ENCODE measurements at regions of chr11 and their contacts with region 1.

Region 1: DNA sequence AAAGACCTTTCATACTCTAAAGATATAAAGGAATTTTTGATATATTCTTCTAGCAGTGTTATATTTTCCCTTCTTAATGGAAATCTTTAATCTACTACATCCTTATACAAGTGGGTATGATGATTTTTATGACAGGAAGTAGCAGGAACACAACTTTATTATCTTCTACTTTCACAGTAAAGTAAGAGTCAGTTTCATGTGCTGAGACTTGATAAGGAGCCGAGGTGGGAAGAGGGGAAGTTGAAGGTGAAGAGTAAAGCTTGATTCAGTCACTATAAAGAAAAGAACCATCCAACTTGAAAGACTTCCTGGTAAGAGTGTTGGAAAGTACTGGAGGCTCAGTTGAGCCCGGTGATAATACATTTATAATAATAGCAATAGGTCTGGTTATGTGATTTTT is 82.1 kb upstream of the PTH start:
- DNase-seq: no peak
- H3K4me3 ChIP-seq: no peak overlapping the region
- H3K27ac ChIP-seq: no peak overlapping the region
- H3K4me1 ChIP-seq: no peaks in the 10 kb centered on the region
- H3K27me3 ChIP-seq: no peaks in the 10 kb centered on the region
- CTCF ChIP-seq: no peak
- POLR2A ChIP-seq: no peak

Region 2: DNA sequence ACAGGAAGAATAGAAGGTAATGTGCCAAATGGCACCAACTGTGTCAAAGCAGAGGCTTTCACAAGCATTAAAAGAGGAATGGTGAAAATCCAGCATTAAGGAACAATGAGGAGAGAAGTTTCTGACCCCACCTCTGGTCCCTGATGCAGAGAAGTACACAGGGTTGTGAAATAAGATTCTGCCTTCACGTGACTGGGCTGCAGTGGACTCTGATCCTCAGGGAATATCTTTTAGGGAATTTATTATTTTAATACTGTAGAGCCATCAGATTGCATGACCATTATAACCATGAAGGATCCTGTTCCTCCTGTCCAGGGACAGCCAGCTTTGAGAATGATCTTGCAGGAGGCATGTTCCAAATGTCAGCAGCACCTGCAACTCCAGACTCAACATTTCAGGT is 16.2 kb after region 1 on chr11:
- intact Hi-C with region 1: loop called (anchors 1 kb)
- DNase-seq: no peak
- H3K4me3 ChIP-seq: no peak overlapping the region
- H3K27ac ChIP-seq: no peak overlapping the region
- H3K4me1 ChIP-seq: no peaks in the 10 kb centered on the region
- H3K27me3 ChIP-seq: no peaks in the 10 kb centered on the region
- CTCF ChIP-seq: no peak
- POLR2A ChIP-seq: no peak

Region 3: DNA sequence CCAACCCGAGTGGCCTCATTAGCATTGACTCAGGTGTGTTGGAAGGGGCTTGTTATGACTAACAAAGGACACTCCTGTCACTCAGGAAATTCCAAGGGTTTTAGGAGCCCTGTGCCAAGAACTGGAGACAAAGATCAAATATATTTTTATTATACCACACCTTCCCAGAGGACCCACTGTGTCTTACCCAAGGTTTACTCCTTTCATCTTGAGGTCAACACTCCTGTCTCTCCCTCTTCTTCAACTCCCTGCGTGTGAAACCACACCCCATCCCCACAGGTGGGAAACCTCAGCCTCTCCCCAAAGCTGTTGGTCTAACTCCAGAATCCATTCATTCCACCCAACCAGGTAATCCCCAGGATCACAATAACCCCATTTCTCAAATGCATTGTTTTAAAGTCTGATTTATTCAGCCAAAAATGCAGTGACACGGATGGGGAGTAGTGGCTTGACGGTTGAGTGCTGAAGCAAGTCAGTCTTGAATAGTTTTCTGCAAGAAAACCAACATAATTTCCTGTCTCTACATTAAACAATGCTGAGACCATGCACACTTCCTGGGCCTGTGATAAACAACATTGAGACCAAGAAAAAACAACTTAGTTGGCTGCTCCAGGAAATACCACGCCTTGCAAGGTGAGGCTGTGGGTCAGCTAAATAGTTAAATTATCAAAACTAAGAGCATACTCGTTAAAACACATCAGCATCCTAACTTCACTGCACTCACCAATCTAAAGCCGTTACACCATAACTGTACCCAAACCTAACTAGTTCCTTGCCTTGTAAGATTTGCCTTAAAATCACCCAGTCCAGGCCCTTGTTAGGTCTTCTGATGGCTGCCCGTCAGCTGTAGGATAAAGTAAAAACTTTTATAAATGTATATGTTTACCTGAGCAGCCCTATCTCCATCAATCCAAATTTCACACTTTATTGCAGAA is 346.1 kb after region 1 on chr11:
- intact Hi-C with region 1: no loop called
- DNase-seq: no peak
- H3K4me3 ChIP-seq: no peak overlapping the region
- H3K27ac ChIP-seq: no peak overlapping the region
- H3K4me1 ChIP-seq: no peaks in the 10 kb centered on the region
- H3K27me3 ChIP-seq: no peaks in the 10 kb centered on the region
- CTCF ChIP-seq: no peak
- POLR2A ChIP-seq: no peak

Region 4: DNA sequence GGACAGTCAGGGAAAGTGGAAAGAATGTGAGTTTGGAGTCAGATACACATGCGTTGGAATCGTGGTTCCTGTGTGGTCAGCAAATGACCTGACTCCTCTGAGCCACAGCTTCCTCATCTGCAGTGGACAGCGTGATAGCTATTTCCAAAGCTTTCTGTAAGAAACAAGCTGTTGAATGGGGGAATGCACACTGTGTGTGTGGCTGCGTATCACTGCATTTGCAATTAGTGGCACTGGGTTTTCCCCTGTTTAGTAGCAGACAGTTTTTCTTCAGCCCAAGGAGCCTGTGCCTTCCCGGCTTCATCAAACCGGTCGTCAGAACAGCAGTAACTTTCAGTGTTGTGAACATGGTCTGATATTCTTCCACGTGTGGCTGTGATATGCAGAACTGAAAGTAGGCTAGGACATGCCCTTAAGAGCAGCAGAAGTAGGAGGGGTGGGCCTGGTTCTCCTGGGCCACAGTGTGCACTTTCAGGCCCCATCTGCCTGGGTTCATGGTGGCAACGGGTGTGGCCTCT is 659.6 kb after region 1 on chr11:
- intact Hi-C with region 1: no loop called
- DNase-seq: no peak
- H3K4me3 ChIP-seq: no peak overlapping the region
- H3K27ac ChIP-seq: no peak overlapping the region
- H3K4me1 ChIP-seq: no peaks in the 10 kb centered on the region
- H3K27me3 ChIP-seq: no peaks in the 10 kb centered on the region
- CTCF ChIP-seq: no peak
- POLR2A ChIP-seq: no peak